GM12878 (cell line): ENCODE measurements at regions of chr5 and their contacts with region 1.

Region 1: DNA sequence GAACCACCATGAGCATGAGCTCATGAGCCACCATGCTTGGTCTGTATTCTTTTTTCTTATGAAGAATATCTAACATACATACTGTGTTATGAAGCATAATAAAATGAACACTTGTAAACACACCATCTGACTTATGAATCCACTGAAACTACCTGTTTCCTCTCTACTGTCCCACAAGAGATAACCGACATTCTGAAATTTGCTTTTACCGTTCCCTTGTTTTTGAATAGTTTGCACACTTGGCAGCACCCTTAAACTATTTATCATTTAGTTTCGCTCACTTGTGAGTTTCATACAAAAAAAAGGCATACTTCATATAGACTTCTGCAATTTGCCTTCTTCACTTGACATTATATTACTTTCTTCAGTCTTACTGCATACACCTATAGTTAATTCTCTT is 8.9 kb downstream of the LARS1 start:
- DNase-seq: peak; percentile 69
- ATAC-seq: peak; percentile 96
- H3K4me3 ChIP-seq: no peak overlapping the region
- H3K27ac ChIP-seq: peak overlapping the region; percentile 10; the same call in 1 of the 2 replicates
- H3K4me1 ChIP-seq: no peaks in the 10 kb centered on the region; the same call in none of the 2 replicates
- H3K27me3 ChIP-seq: no peaks in the 10 kb centered on the region
- CTCF ChIP-seq: no peak
- EP300 ChIP-seq: peak; percentile 79 to 82
- POLR2A ChIP-seq: no peak
- RAD21 ChIP-seq: no peak

Region 2: GRCh38 chr5:145157841-145158240 is 1015.8 kb before region 1 on chr5:
- CTCF ChIA-PET with region 1: no interaction called
- POLR2A ChIA-PET with region 1: no interaction called
- RAD21 ChIA-PET with region 1: no interaction called
- SMC1A ChIA-PET with region 1: no interaction called
- in situ Hi-C with region 1: no loop called
- intact Hi-C with region 1: no loop called
- DNase-seq: no peak
- ATAC-seq: no peak
- H3K4me3 ChIP-seq: no peak overlapping the region
- H3K27ac ChIP-seq: no peak overlapping the region
- H3K4me1 ChIP-seq: no peaks in the 10 kb centered on the region
- H3K27me3 ChIP-seq: no peaks in the 10 kb centered on the region; a peak in 1 of 4 replicates
- CTCF ChIP-seq: no peak
- EP300 ChIP-seq: no peak
- POLR2A ChIP-seq: no peak
- RAD21 ChIP-seq: no peak

Region 3: GRCh38 chr5:145637396-145637795 is 536.2 kb before region 1 on chr5:
- CTCF ChIA-PET with region 1: no interaction called
- POLR2A ChIA-PET with region 1: no interaction called
- RAD21 ChIA-PET with region 1: no interaction called
- SMC1A ChIA-PET with region 1: no interaction called
- in situ Hi-C with region 1: no loop called
- intact Hi-C with region 1: no loop called
- DNase-seq: no peak
- ATAC-seq: no peak
- H3K4me3 ChIP-seq: no peak overlapping the region
- H3K27ac ChIP-seq: no peak overlapping the region
- H3K4me1 ChIP-seq: no peaks in the 10 kb centered on the region
- H3K27me3 ChIP-seq: no peaks in the 10 kb centered on the region
- CTCF ChIP-seq: no peak
- EP300 ChIP-seq: no peak
- POLR2A ChIP-seq: no peak
- RAD21 ChIP-seq: no peak

Region 4: DNA sequence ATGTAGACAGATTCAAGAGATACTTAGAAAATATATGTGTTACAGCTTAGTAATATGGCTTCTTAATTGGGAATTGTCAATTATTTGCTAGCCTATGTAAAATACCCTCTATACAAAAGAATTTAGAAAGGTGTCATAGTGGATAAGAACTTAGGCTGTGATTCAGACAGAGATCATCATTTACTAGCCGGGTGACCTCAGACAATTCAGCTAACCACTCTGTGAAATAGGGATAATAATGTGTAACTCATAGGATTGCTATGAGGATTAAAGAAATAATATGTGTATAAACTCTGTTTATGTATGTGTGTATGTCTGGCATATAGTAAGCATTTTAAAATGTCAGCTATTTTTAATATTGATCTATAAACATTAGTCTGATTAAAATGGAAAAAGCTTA is 14.8 kb after region 1 on chr5:
- CTCF ChIA-PET with region 1: interaction called, 3 read pairs
- POLR2A ChIA-PET with region 1: interaction called, 11 read pairs
- RAD21 ChIA-PET with region 1: no interaction called
- SMC1A ChIA-PET with region 1: interaction called, 3 read pairs
- in situ Hi-C with region 1: no loop called
- intact Hi-C with region 1: no loop called
- DNase-seq: no peak
- ATAC-seq: no peak
- H3K4me3 ChIP-seq: no peak overlapping the region
- H3K27ac ChIP-seq: no peak overlapping the region
- H3K4me1 ChIP-seq: no peaks in the 10 kb centered on the region
- H3K27me3 ChIP-seq: no peaks in the 10 kb centered on the region; a peak in 1 of 4 replicates
- CTCF ChIP-seq: no peak
- EP300 ChIP-seq: no peak
- POLR2A ChIP-seq: no peak
- RAD21 ChIP-seq: no peak